MCF 10A (cell line): ENCODE measurements at regions of chr1 and their contacts with region 1.

Region 1: GRCh38 chr1:227805606-227806197 is 9.8 kb upstream of the PRSS38 start:
- DNase-seq: peak; percentile 100
- H3K4me3 Mint-ChIP-seq: no peak overlapping the region
- H3K27ac Mint-ChIP-seq: peak overlapping the region; percentile 93
- H3K4me1 Mint-ChIP-seq: peaks cover 27% of the 10 kb centered on the region
- H3K27me3 Mint-ChIP-seq: no peaks in the 10 kb centered on the region
- CTCF ChIP-seq: peak; percentile 36

Region 2: DNA sequence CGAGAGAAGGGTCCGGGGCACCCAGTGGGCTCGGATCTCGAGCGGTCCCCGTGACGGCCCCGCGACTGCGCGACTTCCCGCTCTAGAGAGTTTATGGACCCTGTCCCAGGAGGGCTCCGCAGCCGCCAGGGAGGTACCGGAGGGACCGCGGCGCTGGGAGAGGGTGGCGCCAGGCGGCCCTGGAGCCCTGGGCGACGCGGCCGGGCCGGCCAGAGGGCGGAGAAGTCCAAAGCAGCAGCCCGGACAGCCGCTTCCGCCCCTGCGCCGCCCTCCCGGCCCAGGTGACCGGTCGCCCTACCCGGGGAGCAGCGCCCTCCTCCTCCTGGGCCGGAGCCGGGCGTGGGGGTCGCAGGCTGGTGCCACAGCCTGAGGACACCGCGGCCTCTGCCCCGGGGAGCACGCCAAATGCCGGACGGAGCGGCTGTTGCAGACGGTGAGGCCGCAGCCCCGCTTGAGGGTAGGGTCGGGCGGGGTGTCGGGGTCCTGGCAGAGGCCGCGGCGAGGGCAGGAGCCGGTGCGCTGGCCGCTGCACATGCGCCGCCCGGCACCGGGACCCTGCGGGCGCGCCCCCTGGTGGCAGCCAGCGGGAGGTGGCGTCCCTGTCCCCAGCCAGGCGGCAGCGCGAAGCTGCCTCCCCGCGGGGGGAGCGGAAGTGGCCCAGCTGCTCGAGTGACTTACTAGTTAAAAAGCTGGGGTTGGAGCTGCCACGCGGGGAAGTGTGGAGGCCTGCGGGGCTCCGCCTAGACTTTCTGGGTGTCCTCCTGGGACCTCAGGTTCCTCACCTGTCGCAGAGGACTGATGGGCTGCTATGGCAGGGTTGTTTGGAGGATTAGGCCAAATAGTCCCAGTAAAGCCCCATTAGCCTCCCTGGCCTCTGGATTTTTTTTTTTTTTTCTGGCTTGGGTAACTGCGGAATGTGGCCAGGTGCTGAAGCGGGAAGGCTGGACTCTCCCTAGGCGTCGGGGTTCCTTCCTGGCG is 263.3 kb before region 1 on chr1:
- CTCF ChIA-PET with region 1: no interaction called
- POLR2A ChIA-PET with region 1: no interaction called
- intact Hi-C with region 1: no loop called
- DNase-seq: peak; percentile 65
- H3K4me3 Mint-ChIP-seq: peak overlapping the region; percentile 39
- H3K27ac Mint-ChIP-seq: no peak overlapping the region
- H3K4me1 Mint-ChIP-seq: no peaks in the 10 kb centered on the region
- H3K27me3 Mint-ChIP-seq: no peaks in the 10 kb centered on the region
- CTCF ChIP-seq: peak; percentile 99

Region 3: DNA sequence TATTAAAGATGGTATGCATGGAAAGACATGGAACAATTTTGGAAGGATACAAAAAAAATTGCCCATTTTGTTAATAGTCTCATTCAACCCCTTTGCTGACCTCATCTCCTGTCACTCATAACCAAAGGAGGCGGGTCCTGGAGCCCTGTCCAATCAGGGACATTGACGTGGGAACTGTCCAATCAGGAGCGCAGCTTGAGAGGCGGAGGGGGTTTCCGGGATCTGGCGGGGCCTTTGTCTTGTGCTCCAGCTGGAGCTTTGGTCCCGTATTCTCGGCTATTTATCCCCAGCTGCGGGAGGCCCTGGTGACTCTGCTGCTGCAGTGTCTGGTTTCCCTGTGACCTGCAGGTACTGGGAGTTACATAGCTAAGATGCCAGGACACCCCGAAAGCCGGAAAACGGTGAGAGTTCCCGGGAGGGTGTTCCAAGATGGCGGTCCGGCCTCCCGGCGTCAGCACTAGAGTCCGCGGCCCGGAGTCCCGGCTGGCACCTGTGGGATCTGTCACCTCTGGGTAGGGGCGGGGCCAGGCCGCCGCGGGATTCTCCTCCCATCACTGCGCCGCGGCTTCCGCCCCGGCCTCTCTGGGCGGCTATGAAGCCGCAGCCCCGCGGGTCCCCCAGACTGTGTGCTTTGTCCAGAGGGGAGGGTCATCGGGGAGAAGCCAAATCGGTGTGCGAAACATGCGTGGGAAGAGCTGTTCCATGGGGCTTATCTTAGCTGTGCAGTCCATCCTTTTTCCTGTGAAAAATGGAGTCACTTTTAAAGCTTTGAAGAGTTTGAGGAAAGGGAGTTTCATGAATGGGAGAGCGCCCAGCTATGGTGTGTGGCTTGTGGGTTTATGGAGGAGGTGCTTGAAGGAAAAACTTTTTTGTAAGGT is 242.1 kb before region 1 on chr1 and contains the start of gene ZNF678:
- CTCF ChIA-PET with region 1: no interaction called
- POLR2A ChIA-PET with region 1: interaction called, 10 read pairs
- intact Hi-C with region 1: no loop called
- DNase-seq: peak; percentile 100
- H3K4me3 Mint-ChIP-seq: peak within 1 kb of the TSS; percentile 98
- H3K27ac Mint-ChIP-seq: peak within 1 kb of the TSS; percentile 100
- H3K4me1 Mint-ChIP-seq: peaks cover 10% of the 10 kb centered on the region
- H3K27me3 Mint-ChIP-seq: no peaks in the 10 kb centered on the region
- CTCF ChIP-seq: no peak
- total RNA-seq, gene ZNF678: 10.8 and 13.0 TPM in 2 replicates

Region 4: DNA sequence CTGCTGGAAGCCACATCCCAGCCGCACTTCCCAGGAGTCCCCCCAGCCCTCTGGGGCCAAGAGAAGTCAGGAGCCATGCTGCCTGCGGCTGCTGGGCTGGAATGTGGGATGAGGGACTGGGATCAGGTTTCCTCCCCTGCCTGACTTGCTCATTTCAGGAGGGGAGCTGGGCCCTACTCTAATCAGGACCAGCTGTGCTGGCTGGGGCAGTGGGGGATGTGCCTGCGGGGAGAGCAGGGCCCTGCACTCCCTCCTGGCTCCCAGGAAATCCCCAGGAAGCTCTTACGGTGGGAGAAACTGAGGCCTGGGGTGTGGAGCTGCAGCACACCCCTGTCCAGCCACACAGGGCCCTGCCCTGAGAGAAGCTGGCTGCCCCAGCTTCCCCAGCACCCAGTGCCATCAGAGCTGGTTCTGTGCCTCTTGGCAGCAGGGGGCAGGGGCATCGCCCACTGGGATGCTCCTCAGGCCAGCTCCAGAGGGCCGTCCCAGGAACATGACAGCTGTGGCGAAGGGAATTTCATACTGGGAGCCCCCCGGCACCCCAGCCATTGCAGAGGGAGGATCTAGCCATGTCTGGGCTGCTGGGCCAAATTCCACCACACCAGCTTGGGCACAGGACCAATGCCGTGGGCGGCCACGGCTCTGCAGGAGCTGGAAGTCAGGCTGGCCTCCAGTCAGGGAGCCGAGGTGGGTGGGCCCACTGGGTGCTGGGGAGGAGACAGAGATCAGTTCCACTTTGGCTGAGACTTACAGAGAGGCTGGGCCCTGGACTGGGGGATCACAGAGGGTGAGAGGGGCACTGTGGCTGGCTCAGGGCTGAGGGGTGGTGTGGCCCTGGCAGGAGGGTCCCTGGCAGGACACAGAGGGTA is 11.5 kb before region 1 on chr1:
- CTCF ChIA-PET with region 1: interaction called, 5 read pairs
- POLR2A ChIA-PET with region 1: interaction called, 11 read pairs
- intact Hi-C with region 1: no loop called
- DNase-seq: peak; percentile 87
- H3K4me3 Mint-ChIP-seq: no peak overlapping the region
- H3K27ac Mint-ChIP-seq: peak overlapping the region; percentile 44
- H3K4me1 Mint-ChIP-seq: peaks cover 7% of the 10 kb centered on the region
- H3K27me3 Mint-ChIP-seq: peaks cover 10% of the 10 kb centered on the region
- CTCF ChIP-seq: no peak

Region 5: GRCh38 chr1:227886993-227887696 is 81.4 kb after region 1 on chr1:
- CTCF ChIA-PET with region 1: interaction called, 9 read pairs
- POLR2A ChIA-PET with region 1: interaction called, 5 read pairs
- intact Hi-C with region 1: loop called (anchors 5 kb)
- DNase-seq: no peak
- H3K4me3 Mint-ChIP-seq: no peak overlapping the region
- H3K27ac Mint-ChIP-seq: no peak overlapping the region
- H3K4me1 Mint-ChIP-seq: peaks cover 7% of the 10 kb centered on the region
- H3K27me3 Mint-ChIP-seq: no peaks in the 10 kb centered on the region
- CTCF ChIP-seq: no peak

Region 6: DNA sequence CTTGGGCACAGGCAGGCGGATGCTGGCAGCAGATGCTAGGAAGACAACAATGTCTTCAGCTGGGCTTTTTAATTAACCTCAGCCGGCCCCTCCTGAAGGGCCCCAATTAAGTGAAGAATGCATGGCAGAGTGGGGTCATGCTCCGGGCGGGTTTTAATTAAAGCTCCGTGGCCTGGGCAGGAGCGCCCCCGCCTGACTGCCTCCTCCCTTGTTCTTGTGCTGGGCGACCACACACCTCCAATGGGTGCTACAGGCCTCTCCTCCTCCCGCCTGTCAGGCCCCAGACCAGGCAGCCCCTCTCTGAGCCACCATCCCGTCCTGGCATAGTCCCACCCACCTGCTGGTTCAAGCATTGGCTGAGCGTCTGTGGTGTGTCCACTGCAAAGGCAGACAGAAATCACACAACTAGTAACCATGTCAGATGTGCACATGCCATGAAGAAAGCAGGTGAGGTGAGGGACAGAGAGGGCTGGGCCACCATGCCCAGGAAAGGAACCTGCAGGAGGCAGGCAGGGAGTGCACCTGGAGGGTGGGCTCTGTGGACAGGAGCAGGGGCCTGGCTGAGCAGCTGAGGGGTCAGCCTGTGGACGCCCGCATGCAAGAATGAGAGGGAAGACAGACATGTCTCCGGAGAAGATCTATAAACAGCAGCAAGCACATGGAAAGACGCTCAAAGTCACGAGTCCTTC is 268.3 kb after region 1 on chr1:
- CTCF ChIA-PET with region 1: no interaction called
- POLR2A ChIA-PET with region 1: interaction called, 3 read pairs
- intact Hi-C with region 1: loop called (anchors 5 kb)
- DNase-seq: peak; percentile 74
- H3K4me3 Mint-ChIP-seq: no peak overlapping the region
- H3K27ac Mint-ChIP-seq: no peak overlapping the region
- H3K4me1 Mint-ChIP-seq: peaks cover 11% of the 10 kb centered on the region
- H3K27me3 Mint-ChIP-seq: peaks cover 2% of the 10 kb centered on the region
- CTCF ChIP-seq: peak; percentile 77